Panc1 (cell line): ENCODE measurements at regions of chr18 and their contacts with region 1.

Region 1: GRCh38 chr18:76405681-76406356 is 89.2 kb downstream of the ZNF516 start:
- DNase-seq: no peak
- ATAC-seq: peak; percentile 86
- H3K4me3 ChIP-seq: no peak overlapping the region
- H3K27ac ChIP-seq: no peak overlapping the region
- H3K4me1 ChIP-seq: 0 out of 2 replicates have a peak, but pooled peaks cover 2% of the 10 kb centered on the region
- H3K27me3 ChIP-seq: no peaks in the 10 kb centered on the region
- CTCF ChIP-seq: no peak

Region 2: DNA sequence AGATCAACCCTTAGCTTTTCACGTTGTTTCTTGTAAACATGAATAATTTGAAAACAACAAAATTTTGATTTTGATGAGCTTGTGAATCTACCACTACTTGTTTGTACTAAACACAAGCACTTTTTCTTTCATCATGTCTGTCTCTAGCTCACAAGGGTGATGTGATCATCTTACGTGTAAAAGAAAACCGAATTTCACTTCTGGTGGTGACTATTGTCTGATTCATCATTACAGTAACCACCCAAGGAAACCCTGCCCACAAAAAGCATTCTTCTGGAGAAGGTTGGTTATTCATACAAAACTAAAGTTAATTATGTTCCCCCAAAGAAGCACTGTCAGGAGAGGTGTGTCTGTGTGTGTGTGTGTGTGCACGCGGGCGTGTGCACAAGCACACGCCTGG is 196.2 kb before region 1 on chr18:
- CTCF ChIA-PET with region 1: no interaction called
- POLR2A ChIA-PET with region 1: no interaction called
- in situ Hi-C with region 1: no loop called
- intact Hi-C with region 1: no loop called
- DNase-seq: peak; percentile 8
- ATAC-seq: no peak
- H3K4me3 ChIP-seq: no peak overlapping the region
- H3K27ac ChIP-seq: no peak overlapping the region
- H3K4me1 ChIP-seq: no peaks in the 10 kb centered on the region
- H3K27me3 ChIP-seq: peaks cover 32% of the 10 kb centered on the region
- CTCF ChIP-seq: no peak

Region 3: DNA sequence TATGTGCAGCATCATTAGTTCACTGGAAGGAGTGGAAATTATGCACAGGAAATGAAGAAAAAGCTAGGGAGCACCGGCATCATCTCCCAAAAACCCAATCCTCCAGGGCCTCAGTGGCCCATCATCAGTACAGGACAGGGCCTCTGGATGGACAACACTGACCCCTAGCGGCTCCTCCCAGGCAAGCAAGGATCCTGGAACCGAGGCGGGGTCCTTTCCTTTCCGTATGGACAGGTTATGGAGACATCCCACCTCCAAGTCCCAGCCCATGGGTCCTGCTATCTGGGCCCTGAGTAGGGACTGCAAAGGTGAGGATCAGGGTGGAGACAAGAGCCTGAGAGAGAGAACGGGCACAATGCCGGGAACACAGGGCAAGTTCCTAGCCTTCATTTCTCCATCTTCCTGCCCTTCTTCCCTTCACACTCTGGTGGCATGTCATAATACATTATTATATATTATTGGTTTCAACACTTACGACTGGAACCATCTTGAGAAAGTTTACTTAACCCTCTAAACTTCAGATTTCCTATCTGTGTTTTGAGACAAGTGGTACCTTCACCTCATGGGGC is 21.0 kb after region 1 on chr18:
- CTCF ChIA-PET with region 1: no interaction called
- POLR2A ChIA-PET with region 1: no interaction called
- in situ Hi-C with region 1: no loop called
- intact Hi-C with region 1: loop called (anchors 2 kb)
- DNase-seq: no peak
- ATAC-seq: peak; percentile 89
- H3K4me3 ChIP-seq: no peak overlapping the region
- H3K27ac ChIP-seq: no peak overlapping the region
- H3K4me1 ChIP-seq: no peaks in the 10 kb centered on the region
- H3K27me3 ChIP-seq: no peaks in the 10 kb centered on the region
- CTCF ChIP-seq: no peak

Region 4: GRCh38 chr18:76476665-76477561 is 71.1 kb after region 1 on chr18:
- CTCF ChIA-PET with region 1: no interaction called
- POLR2A ChIA-PET with region 1: no interaction called
- in situ Hi-C with region 1: no loop called
- intact Hi-C with region 1: loop called (anchors 5 kb)
- DNase-seq: no peak
- ATAC-seq: peak; percentile 85
- H3K4me3 ChIP-seq: peak overlapping the region; percentile 34 to 51
- H3K27ac ChIP-seq: peak overlapping the region; percentile 83
- H3K4me1 ChIP-seq: peaks cover 42% of the 10 kb centered on the region
- H3K27me3 ChIP-seq: no peaks in the 10 kb centered on the region
- CTCF ChIP-seq: no peak

Region 5: DNA sequence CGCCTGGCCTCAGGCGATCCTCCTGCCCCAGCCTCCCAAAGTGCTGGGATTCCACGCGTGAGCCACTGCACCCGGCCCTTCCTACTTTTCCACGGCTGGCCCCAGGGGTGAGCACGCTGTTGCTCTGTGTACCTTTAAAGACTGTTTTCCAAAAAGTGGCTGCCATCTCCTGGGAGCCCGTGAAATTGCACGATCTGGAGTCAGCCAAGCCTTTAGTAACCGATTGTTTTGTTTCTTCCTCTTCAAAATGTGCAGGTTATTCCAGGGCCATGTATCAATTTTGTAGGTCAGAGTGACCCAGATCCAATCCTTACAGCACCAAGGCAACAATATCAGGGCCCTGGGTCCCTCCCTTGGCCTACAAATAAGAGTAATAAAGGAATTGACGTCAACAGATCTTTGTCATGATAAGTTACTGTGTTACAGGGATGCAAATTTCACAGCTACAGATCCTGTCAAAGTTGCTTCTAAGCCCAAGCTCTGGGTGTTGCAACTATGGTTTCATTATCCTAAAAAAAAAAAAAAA is 281.0 kb after region 1 on chr18:
- CTCF ChIA-PET with region 1: no interaction called
- POLR2A ChIA-PET with region 1: no interaction called
- in situ Hi-C with region 1: no loop called
- intact Hi-C with region 1: no loop called
- DNase-seq: peak; percentile 22
- ATAC-seq: peak; percentile 89
- H3K4me3 ChIP-seq: 0 out of 4 replicates have a peak overlapping the region, but pooled peaks of 1 of the 2 experiments have one; percentile 9
- H3K27ac ChIP-seq: no peak overlapping the region
- H3K4me1 ChIP-seq: peaks cover 11% of the 10 kb centered on the region
- H3K27me3 ChIP-seq: peaks cover 27% of the 10 kb centered on the region
- CTCF ChIP-seq: no peak